ENCODE measurements at regions of chr1 and their contacts with region 1.

Region 1: DNA sequence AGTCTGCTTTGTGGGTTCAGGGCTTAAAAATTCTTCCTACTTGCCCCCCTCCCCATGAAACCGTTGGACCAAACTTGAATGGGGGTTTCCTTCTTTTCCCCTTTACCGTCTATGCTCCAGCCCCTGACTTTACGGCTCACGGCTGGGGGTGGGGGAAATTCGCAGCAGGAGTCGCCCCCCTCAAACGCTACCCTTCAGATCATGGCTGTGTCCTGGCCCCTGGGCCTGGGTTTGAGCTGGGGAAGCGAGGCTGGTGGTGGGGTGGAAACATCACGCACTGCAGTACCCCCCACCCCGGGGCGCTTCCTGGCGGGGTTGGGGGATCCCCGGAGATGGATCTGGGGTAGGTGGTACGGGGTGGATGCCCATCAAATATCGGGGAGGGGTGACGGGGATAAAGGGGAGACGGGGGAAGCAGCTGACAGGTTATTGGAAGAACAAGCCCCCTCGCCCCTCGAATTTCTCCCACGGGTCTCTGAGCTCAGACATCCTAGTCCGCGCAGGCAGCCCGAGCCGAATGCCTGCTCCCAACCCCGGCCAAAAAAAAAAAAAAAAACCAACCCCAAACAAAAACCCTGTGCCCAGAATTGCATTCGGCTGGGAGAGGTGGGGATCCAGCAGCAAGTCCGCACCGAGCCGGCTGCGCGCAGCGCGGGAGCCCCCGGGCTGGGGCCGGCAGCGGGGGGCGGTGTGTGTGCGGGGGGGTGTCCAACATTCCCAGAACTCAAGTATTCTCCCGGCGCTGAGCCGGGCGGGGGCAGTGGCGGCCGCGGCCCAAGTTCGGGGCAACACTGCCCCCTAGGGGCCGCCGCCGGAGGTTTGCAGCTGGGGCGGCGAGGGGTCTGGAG is 59.0 kb upstream of the ACOT11 start:
- DNase-seq: peak; percentile 72 to 87
- H3K4me3 ChIP-seq: peak overlapping the region; percentile 56
- H3K4me3 Mint-ChIP-seq: peak overlapping the region; percentile 68
- H3K27ac Mint-ChIP-seq: peak overlapping the region; percentile 64
- H3K4me1 ChIP-seq: peaks cover 14% of the 10 kb centered on the region
- H3K4me1 Mint-ChIP-seq: peaks cover 19% of the 10 kb centered on the region
- H3K27me3 ChIP-seq: no peaks in the 10 kb centered on the region
- H3K27me3 Mint-ChIP-seq: no peaks in the 10 kb centered on the region
- CTCF ChIP-seq: peak; percentile 80 to 82

Region 2: GRCh38 chr1:54070171-54070837 is 418.7 kb before region 1 on chr1:
- CTCF ChIA-PET with region 1: no interaction called
- POLR2A ChIA-PET with region 1: no interaction called
- intact Hi-C with region 1: loop called (anchors 1 kb)
- DNase-seq: peak in 1 of 2 experiments; percentile 15
- H3K4me3 ChIP-seq: no peak overlapping the region
- H3K4me3 Mint-ChIP-seq: no peak overlapping the region
- H3K27ac Mint-ChIP-seq: no peak overlapping the region
- H3K4me1 ChIP-seq: no peaks in the 10 kb centered on the region
- H3K4me1 Mint-ChIP-seq: peaks cover 7% of the 10 kb centered on the region
- H3K27me3 ChIP-seq: no peaks in the 10 kb centered on the region
- H3K27me3 Mint-ChIP-seq: no peaks in the 10 kb centered on the region
- CTCF ChIP-seq: peak in 1 of 2 experiments; percentile 72

Region 3: DNA sequence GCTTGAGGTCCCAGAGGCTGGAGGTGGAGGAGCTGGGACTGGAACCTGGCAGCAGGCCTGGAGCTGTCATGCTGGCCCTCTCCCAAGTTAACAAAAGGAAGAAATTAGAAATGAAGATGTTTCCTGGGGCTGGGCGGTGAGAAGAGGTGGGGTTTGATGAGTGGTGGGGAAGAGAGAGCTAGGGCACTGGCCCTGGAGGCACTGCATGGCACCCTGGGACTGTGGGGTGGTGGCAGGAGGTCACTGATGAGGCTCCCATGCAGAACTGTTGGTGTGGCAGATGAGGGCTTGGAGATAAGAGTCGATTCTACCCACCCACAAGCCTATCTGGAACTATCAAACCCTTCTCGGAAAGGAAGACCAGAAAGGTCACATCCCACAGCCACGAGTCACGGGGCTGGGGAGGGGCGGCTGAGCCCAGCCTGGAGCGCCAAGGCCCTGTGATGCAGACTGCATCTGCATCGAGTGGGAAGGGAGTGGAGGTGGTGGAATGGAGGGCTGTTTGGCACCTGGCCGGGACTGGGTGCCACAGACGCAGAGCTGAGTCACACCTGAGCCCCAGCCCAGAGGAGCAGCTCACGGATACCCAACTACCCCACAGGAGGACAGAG is 259.6 kb before region 1 on chr1:
- CTCF ChIA-PET with region 1: no interaction called
- POLR2A ChIA-PET with region 1: no interaction called
- intact Hi-C with region 1: no loop called
- DNase-seq: peak; percentile 56 to 67
- H3K4me3 ChIP-seq: no peak overlapping the region
- H3K4me3 Mint-ChIP-seq: no peak overlapping the region
- H3K27ac Mint-ChIP-seq: peak overlapping the region; percentile 65
- H3K4me1 ChIP-seq: peaks cover 13% of the 10 kb centered on the region
- H3K4me1 Mint-ChIP-seq: peaks cover 9% of the 10 kb centered on the region
- H3K27me3 ChIP-seq: no peaks in the 10 kb centered on the region
- H3K27me3 Mint-ChIP-seq: no peaks in the 10 kb centered on the region
- CTCF ChIP-seq: no peak

Region 4: GRCh38 chr1:54277451-54278341 is 211.3 kb before region 1 on chr1:
- CTCF ChIA-PET with region 1: no interaction called
- POLR2A ChIA-PET with region 1: no interaction called
- intact Hi-C with region 1: loop called (anchors 1 kb)
- DNase-seq: no peak
- H3K4me3 ChIP-seq: no peak overlapping the region
- H3K4me3 Mint-ChIP-seq: no peak overlapping the region
- H3K27ac Mint-ChIP-seq: peak overlapping the region; percentile 59
- H3K4me1 ChIP-seq: peaks cover 16% of the 10 kb centered on the region
- H3K4me1 Mint-ChIP-seq: peaks cover 11% of the 10 kb centered on the region
- H3K27me3 ChIP-seq: no peaks in the 10 kb centered on the region
- H3K27me3 Mint-ChIP-seq: no peaks in the 10 kb centered on the region
- CTCF ChIP-seq: no peak

Region 5: DNA sequence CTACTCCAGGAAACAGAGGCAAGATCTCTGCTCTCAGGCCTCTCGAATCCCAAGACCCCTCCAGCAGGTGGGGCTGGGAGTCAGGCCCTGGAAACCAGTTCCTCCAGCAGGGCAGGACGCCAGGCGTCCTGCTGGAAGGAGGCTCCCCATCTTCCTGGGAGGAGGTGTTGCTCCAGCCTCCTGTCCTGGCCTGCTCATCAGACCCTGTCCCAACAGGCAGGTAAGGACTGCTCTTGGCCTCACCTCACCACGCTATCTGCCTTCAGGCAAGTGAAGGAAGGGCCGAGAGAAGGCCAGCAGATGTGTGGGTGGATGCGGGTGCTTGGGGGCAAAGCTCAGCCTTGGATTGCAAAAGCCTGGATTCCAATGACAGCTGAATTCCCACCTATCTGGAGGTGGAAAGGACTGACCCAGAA is 165.7 kb before region 1 on chr1:
- CTCF ChIA-PET with region 1: interaction called, 5 read pairs
- POLR2A ChIA-PET with region 1: interaction called, 3 read pairs
- intact Hi-C with region 1: loop called (anchors 1 kb)
- DNase-seq: peak; percentile 82 to 92
- H3K4me3 ChIP-seq: no peak overlapping the region
- H3K4me3 Mint-ChIP-seq: peak overlapping the region; percentile 22
- H3K27ac Mint-ChIP-seq: peak overlapping the region; percentile 60
- H3K4me1 ChIP-seq: peaks cover 17% of the 10 kb centered on the region
- H3K4me1 Mint-ChIP-seq: peaks cover 18% of the 10 kb centered on the region
- H3K27me3 ChIP-seq: no peaks in the 10 kb centered on the region
- H3K27me3 Mint-ChIP-seq: no peaks in the 10 kb centered on the region
- CTCF ChIP-seq: peak; percentile 24 to 50

Region 6: DNA sequence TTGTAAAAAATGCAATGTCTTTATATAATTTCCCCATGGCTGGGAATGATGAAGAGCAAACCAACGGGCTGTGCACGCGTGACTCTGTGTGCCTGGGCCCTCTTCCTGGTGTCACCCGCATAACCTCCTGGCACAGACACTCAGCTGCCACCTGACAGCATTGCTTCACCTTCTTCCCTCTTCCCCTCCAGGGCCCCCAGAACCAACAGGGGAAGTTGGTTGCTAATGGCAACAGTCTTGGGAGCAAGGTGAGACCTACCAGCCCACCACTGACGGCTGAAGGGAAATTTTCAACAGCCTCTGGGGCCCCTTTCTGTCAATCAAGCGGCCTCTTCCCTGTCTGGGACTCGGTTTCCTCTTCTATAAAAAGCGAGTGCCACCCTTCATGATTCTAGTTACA is 116.0 kb before region 1 on chr1:
- CTCF ChIA-PET with region 1: interaction called, 10 read pairs
- POLR2A ChIA-PET with region 1: no interaction called
- intact Hi-C with region 1: no loop called
- DNase-seq: no peak
- H3K4me3 ChIP-seq: no peak overlapping the region
- H3K4me3 Mint-ChIP-seq: no peak overlapping the region
- H3K27ac Mint-ChIP-seq: no peak overlapping the region
- H3K4me1 ChIP-seq: no peaks in the 10 kb centered on the region
- H3K4me1 Mint-ChIP-seq: peaks cover 9% of the 10 kb centered on the region
- H3K27me3 ChIP-seq: no peaks in the 10 kb centered on the region
- H3K27me3 Mint-ChIP-seq: no peaks in the 10 kb centered on the region
- CTCF ChIP-seq: no peak

Region 7: DNA sequence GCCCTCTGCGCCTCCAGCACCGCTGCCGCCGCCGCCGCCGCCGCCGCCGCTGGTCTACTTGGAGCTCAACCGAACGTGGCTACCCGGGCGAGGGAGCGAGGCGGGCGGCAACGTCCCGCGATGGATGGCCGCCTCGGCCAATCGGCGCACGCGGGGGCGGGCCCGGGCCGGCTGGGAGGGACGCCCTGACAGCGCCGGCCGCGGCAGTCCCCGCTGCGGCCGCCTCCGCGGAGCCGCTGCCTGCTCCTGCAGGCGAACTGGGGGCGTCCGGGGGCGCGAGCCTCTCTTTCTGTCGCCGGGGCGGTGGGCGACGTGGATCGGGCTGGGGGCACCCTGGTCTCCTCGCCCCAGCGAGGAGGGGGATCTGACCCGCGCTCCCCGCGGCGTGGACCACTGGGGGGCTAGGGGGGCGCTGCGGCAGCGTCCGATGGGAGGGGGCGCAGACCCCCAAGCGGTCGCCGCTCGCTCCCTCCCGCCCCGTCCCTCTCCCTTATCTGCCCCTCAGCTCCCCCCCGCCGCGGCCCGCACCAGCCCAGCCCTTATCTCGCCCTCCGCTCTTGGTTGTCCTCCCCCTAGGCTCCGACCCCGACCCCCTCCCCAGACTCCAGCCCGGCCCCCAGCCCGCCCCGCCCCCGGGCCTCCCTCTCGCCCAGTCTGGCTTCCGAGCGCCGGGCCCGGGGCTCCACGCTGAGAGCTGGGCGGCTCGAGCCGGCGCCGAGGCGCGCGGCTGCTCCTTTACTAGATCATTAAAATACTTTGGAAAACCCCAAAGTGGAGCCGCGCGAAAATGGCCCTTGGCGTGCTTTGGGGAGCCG is 82.5 kb before region 1 on chr1 and contains the start of gene SSBP3:
- CTCF ChIA-PET with region 1: interaction called, 36 read pairs
- POLR2A ChIA-PET with region 1: interaction called, 10 read pairs
- intact Hi-C with region 1: loop called (anchors 1 kb)
- DNase-seq: peak; percentile 87 to 95
- H3K4me3 ChIP-seq: peak within 1 kb of the TSS; percentile 59
- H3K4me3 Mint-ChIP-seq: peak within 1 kb of the TSS; percentile 79
- H3K27ac Mint-ChIP-seq: peak within 1 kb of the TSS; percentile 11
- H3K4me1 ChIP-seq: peaks cover 28% of the 10 kb centered on the region
- H3K4me1 Mint-ChIP-seq: peaks cover 38% of the 10 kb centered on the region
- H3K27me3 ChIP-seq: no peaks in the 10 kb centered on the region
- H3K27me3 Mint-ChIP-seq: no peaks in the 10 kb centered on the region
- CTCF ChIP-seq: no peak
- total RNA-seq, gene SSBP3: 40.6 and 42.1 TPM in 2 replicates

Region 8: DNA sequence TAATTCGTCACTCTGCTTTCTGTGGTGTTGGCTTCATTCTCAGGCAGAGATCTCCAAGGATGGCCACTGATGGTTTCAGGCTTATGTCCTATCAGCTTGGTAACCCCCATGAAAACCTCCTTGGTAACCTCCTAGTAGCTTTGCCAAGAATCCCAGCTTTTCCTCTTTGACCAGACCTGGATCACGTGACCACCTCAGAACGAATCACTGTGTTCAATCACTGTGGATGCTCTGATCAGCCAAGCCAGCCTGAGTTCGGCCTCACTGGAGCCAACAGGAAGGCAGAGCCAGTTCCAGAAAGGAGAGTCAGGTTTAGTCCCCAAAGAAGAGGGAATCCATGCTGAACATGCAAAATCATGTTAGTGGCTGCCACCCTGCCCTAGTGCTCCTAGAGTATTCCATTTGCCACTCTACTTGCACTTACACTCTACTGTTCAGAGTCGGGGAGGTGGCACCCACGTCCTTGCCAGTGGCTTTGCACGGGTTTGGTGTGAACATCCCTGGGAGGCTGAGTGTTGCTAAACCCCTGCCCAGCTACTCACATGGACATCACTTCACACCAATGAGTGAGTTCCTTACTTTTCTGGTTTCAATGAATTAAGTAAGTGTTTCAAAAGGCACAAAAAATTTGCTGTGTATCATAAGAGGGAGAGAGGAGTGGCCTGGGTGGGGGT is 49.3 kb before region 1 on chr1:
- CTCF ChIA-PET with region 1: no interaction called
- POLR2A ChIA-PET with region 1: no interaction called
- intact Hi-C with region 1: no loop called
- DNase-seq: no peak
- H3K4me3 ChIP-seq: no peak overlapping the region
- H3K4me3 Mint-ChIP-seq: no peak overlapping the region
- H3K27ac Mint-ChIP-seq: no peak overlapping the region
- H3K4me1 ChIP-seq: no peaks in the 10 kb centered on the region
- H3K4me1 Mint-ChIP-seq: no peaks in the 10 kb centered on the region
- H3K27me3 ChIP-seq: no peaks in the 10 kb centered on the region
- H3K27me3 Mint-ChIP-seq: no peaks in the 10 kb centered on the region
- CTCF ChIP-seq: no peak

Measured in Caco-2 (cell line).